ENCODE measurements at regions of chr7 and their contacts with region 1.

Region 1: GRCh38 chr7:2894118-2894940 is 50.2 kb upstream of the GNA12 start:
- DNase-seq: peak in 8 of 9 experiments; percentile 16 to 77 (median 50)
- ATAC-seq: peak; percentile 73
- H3K4me3 ChIP-seq: peak overlapping the region; percentile 49
- H3K4me3 Mint-ChIP-seq: peak overlapping the region; percentile 86
- H3K27ac ChIP-seq: peak overlapping the region in 1 of 2 experiments; percentile 28
- H3K27ac Mint-ChIP-seq: peak overlapping the region; percentile 87
- H3K4me1 ChIP-seq: peaks cover 13% of the 10 kb centered on the region
- H3K4me1 Mint-ChIP-seq: peaks cover 24% of the 10 kb centered on the region
- H3K27me3 ChIP-seq: no peaks in the 10 kb centered on the region
- H3K27me3 Mint-ChIP-seq: no peaks in the 10 kb centered on the region
- CTCF ChIP-seq: no peak

Region 2: GRCh38 chr7:2944739-2945138 is 50.4 kb after region 1 on chr7:
- CTCF ChIA-PET with region 1: no interaction called
- POLR2A ChIA-PET with region 1: no interaction called
- intact Hi-C with region 1: loop called in 1 of 2 experiments (anchors 5 kb)
- DNase-seq: no peak
- ATAC-seq: no peak
- H3K4me3 ChIP-seq: no peak overlapping the region
- H3K4me3 Mint-ChIP-seq: no peak overlapping the region
- H3K27ac ChIP-seq: no peak overlapping the region
- H3K27ac Mint-ChIP-seq: peak overlapping the region; percentile 77
- H3K4me1 ChIP-seq: peaks cover 5% of the 10 kb centered on the region
- H3K4me1 Mint-ChIP-seq: peaks cover 18% of the 10 kb centered on the region
- H3K27me3 ChIP-seq: no peaks in the 10 kb centered on the region
- H3K27me3 Mint-ChIP-seq: no peaks in the 10 kb centered on the region
- CTCF ChIP-seq: no peak